HEK293 (cell line): ENCODE measurements at regions of chr1 and their contacts with region 1.

Region 1: DNA sequence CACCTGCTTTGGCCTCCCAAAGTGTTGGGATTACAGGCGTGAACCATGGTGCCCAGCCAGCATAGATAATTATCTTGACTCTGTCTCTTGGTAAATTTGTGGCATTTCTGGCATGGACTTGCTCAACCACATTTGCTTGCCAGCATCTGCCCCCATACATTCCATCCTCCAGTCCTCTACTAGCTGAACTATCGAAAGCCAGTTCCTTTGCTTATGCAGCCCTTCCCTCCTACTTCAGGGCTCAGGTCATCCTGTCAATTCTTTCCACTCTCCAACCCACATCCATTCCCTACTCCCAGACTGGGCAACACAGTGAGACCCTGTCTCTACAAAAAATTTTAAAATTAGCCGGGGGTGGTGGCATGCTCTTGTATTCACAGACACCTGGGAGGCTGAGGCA is 13.0 kb upstream of the UQCRHL start:
- H3K4me3 ChIP-seq: no peak overlapping the region
- H3K27ac ChIP-seq: no peak overlapping the region
- H3K4me1 ChIP-seq: no peaks in the 10 kb centered on the region
- CTCF ChIP-seq: no peak

Region 2: GRCh38 chr1:15803354-15803753 is 17.1 kb before region 1 on chr1:
- CTCF ChIA-PET with region 1: interaction called, 22 read pairs
- POLR2A ChIA-PET with region 1: interaction called, 8 read pairs
- H3K4me3 ChIP-seq: no peak overlapping the region
- H3K27ac ChIP-seq: no peak overlapping the region
- H3K4me1 ChIP-seq: peaks cover 9% of the 10 kb centered on the region
- CTCF ChIP-seq: no peak

Region 3: DNA sequence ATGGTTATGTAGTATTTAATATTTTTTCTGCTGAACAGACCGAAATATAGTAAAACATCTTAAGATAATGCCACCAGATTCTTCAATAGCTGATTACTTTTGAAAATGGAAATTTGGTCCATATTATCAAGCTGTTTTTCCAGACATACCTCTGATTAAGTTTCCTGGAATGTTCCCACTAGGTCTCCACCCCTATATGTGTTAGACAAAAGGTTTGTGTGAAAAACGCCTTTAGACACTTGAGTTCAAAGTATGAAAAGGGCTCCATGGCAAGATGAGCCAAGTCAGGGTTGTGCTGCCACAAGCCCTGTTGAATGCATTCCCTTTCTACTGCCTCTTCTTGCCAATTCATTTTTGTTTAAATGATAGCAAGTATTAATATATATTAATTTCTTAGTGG is 102.8 kb after region 1 on chr1:
- CTCF ChIA-PET with region 1: interaction called, 10 read pairs
- POLR2A ChIA-PET with region 1: no interaction called
- H3K4me3 ChIP-seq: no peak overlapping the region
- H3K27ac ChIP-seq: no peak overlapping the region
- H3K4me1 ChIP-seq: no peaks in the 10 kb centered on the region
- CTCF ChIP-seq: no peak